Activated B cell treated with CpG ODN at 0.5 μM for 24 hours (primary cell): ENCODE measurements at regions of chr3 and their contacts with region 1.

Region 1: GRCh38 chr3:127672516-127673190 is at the start of gene ABTB1:
- DNase-seq: peak; percentile 79
- ATAC-seq: peak; percentile 85
- H3K4me3 Mint-ChIP-seq: peak within 1 kb of the TSS; percentile 91
- H3K27ac Mint-ChIP-seq: peak within 1 kb of the TSS; percentile 93
- H3K4me1 Mint-ChIP-seq: peaks cover 20% of the 10 kb centered on the region
- H3K27me3 Mint-ChIP-seq: no peaks in the 10 kb centered on the region
- CTCF ChIP-seq: no peak
- total RNA-seq, gene ABTB1: 36.1 and 42.0 TPM in 2 replicates

Region 2: DNA sequence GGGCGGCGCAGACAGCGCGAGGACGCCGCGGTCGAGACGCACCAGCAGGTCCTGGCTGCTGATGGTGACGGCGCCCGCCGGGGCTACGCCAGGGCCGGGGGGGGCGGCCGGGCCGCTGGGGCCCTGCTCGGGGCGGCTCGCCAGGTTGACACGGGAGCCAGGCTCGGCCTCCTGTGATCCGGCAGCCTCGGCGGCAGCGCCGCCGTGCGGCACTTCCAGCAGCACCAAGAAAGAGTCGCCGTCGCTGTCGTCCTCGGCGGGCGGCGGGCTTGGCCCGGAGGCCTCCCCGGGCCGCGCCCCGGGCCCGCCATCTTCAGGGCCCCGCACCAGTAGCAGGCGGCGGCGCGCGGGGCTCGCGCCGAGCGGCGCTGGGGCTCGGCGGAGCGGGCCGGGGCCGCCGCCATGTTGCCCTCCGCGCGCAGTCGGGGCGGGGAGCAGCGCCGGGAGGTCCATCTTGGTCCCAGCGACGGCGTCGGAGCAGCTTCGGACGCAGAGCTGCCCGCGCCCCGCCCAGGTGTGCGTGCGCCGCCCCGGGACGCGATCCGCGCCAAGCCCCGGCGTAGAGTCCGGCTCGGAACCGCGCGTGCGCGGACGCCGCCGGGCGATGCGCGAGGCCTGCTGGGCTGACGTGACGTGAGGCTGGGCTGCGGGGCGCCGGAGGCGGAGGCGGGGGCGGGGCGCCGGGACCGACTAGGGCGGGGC is 1197.1 kb before region 1 on chr3 and contains the start of gene ZXDC:
- CTCF ChIA-PET with region 1: no interaction called
- POLR2A ChIA-PET with region 1: no interaction called
- intact Hi-C with region 1: loop called (anchors 5 kb)
- DNase-seq: peak; percentile 92
- ATAC-seq: peak; percentile 86
- H3K4me3 Mint-ChIP-seq: peak within 1 kb of the TSS; percentile 87
- H3K27ac Mint-ChIP-seq: peak within 1 kb of the TSS; percentile 63
- H3K4me1 Mint-ChIP-seq: peaks cover 37% of the 10 kb centered on the region
- H3K27me3 Mint-ChIP-seq: no peaks in the 10 kb centered on the region
- CTCF ChIP-seq: no peak
- total RNA-seq, gene ZXDC: 37.4 and 45.4 TPM in 2 replicates

Region 3: GRCh38 chr3:126971891-126972351 is 700.7 kb before region 1 on chr3:
- CTCF ChIA-PET with region 1: no interaction called
- POLR2A ChIA-PET with region 1: no interaction called
- intact Hi-C with region 1: no loop called
- DNase-seq: peak; percentile 41
- ATAC-seq: peak; percentile 87
- H3K4me3 Mint-ChIP-seq: peak overlapping the region; percentile 19
- H3K27ac Mint-ChIP-seq: peak overlapping the region; percentile 46
- H3K4me1 Mint-ChIP-seq: peaks cover 15% of the 10 kb centered on the region
- H3K27me3 Mint-ChIP-seq: peaks cover 18% of the 10 kb centered on the region
- CTCF ChIP-seq: no peak

Region 4: DNA sequence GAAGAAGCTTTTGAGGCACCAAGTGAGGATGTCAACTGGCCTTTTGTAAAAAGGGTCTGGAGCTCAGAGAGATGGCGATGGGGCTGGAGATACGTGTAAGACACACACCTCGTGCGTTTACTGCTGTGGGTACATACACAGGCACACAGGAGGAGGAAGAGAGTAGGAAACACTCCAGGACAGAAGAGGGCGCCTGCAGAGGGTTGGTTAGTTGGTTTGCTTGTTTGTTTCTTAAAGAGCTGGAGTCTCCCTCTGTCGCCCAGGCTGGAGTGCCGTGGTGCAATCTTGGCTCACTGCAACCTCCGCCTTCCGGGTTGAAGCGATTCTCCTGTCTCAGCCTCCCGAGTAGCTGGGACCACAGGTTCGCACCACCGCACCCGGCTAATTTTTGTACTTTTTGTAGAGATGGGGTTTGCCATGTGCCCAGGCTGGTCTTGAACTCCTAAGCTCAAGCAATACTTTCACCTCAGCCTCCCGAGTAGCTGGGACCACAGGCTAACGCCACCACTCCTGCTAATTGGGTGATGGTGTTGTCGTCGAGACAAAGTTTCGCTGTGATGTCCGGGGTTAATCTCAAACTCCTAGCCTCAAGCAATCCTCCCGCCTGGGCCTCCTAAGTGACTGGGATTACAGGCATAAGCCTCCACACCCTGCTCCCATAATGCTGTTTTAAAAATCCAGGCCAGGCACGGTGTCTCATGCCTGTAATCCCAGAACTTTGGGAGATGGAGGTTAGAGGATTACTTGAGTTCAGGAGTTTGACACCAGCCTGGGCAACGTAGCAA is 383.5 kb before region 1 on chr3:
- CTCF ChIA-PET with region 1: no interaction called
- POLR2A ChIA-PET with region 1: no interaction called
- intact Hi-C with region 1: no loop called
- DNase-seq: no peak
- ATAC-seq: no peak
- H3K4me3 Mint-ChIP-seq: no peak overlapping the region
- H3K27ac Mint-ChIP-seq: no peak overlapping the region
- H3K4me1 Mint-ChIP-seq: no peaks in the 10 kb centered on the region
- H3K27me3 Mint-ChIP-seq: peaks cover 1% of the 10 kb centered on the region
- CTCF ChIP-seq: no peak

Region 5: GRCh38 chr3:127574880-127575878 is 97.5 kb before region 1 on chr3:
- CTCF ChIA-PET with region 1: interaction called, 3 read pairs
- POLR2A ChIA-PET with region 1: no interaction called
- intact Hi-C with region 1: loop called (anchors 5 kb)
- DNase-seq: peak; percentile 83
- ATAC-seq: peak; percentile 99
- H3K4me3 Mint-ChIP-seq: no peak overlapping the region
- H3K27ac Mint-ChIP-seq: peak overlapping the region; percentile 36
- H3K4me1 Mint-ChIP-seq: peaks cover 9% of the 10 kb centered on the region
- H3K27me3 Mint-ChIP-seq: no peaks in the 10 kb centered on the region
- CTCF ChIP-seq: no peak

Region 6: DNA sequence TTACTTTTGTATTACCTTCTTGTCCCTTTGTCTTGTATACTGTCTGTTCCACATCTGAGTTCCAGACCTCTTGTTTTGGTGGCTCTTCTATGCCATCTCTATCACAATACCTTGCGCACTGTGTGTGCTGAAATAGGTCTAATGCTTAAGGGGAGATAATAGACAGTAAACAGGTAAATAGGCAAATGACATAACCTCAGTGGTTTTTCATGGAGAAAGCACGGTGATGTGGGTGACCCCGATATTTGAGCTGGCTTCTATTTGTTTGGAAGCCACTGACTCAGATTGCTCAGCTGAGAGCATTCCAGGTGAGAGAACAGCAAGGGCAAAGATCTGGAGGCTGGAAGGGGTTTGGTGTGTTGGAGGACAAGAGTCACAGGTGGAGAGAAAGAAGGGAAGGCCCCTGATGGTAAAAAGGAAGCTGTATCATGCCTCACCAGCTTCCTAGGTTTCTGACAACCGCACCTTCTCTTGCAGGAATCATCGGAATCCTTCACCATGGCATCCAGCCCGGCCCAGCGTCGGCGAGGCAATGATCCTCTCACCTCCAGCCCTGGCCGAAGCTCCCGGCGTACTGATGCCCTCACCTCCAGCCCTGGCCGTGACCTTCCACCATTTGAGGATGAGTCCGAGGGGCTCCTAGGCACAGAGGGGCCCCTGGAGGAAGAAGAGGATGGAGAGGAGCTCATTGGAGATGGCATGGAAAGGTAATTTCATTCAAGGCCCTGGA is 73.6 kb before region 1 on chr3:
- CTCF ChIA-PET with region 1: no interaction called
- POLR2A ChIA-PET with region 1: interaction called, 12 read pairs
- intact Hi-C with region 1: loop called (anchors 1 kb)
- DNase-seq: no peak
- ATAC-seq: no peak
- H3K4me3 Mint-ChIP-seq: peak overlapping the region; percentile 95
- H3K27ac Mint-ChIP-seq: peak overlapping the region; percentile 93
- H3K4me1 Mint-ChIP-seq: peaks cover 29% of the 10 kb centered on the region
- H3K27me3 Mint-ChIP-seq: no peaks in the 10 kb centered on the region
- CTCF ChIP-seq: no peak

Region 7: GRCh38 chr3:127750226-127751031 is 77.8 kb after region 1 on chr3:
- CTCF ChIA-PET with region 1: no interaction called
- POLR2A ChIA-PET with region 1: interaction called, 6 read pairs
- intact Hi-C with region 1: loop called (anchors 1 kb)
- DNase-seq: peak; percentile 36
- ATAC-seq: peak; percentile 50
- H3K4me3 Mint-ChIP-seq: peak overlapping the region; percentile 69
- H3K27ac Mint-ChIP-seq: peak overlapping the region; percentile 88
- H3K4me1 Mint-ChIP-seq: peaks cover 57% of the 10 kb centered on the region
- H3K27me3 Mint-ChIP-seq: no peaks in the 10 kb centered on the region
- CTCF ChIP-seq: no peak

Region 8: DNA sequence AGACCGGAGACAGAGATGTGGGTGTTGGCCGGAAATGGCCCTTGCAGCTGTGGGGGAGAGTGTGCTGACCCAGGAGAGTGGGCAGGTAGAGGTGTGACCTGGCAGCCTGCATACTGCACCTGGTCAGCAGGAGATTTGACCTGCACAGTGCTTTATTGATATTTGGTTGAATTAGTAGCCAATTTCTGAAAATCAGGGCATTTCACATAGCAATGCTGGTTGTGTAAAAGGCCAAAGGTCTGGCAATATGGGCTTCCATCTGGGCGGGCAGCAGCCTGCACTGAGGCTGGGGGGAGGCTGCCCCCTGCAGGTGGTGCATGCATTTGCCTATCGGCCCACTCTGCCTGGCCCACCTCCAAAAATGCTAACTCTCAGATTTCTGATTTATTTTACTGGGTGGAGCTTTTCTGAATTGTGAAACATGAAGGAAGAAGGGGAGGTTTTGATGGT is 159.1 kb after region 1 on chr3:
- CTCF ChIA-PET with region 1: no interaction called
- POLR2A ChIA-PET with region 1: no interaction called
- intact Hi-C with region 1: loop called (anchors 1 kb)
- DNase-seq: peak; percentile 32
- ATAC-seq: no peak
- H3K4me3 Mint-ChIP-seq: no peak overlapping the region
- H3K27ac Mint-ChIP-seq: no peak overlapping the region
- H3K4me1 Mint-ChIP-seq: peaks cover 40% of the 10 kb centered on the region
- H3K27me3 Mint-ChIP-seq: no peaks in the 10 kb centered on the region
- CTCF ChIP-seq: no peak

Region 9: GRCh38 chr3:127899766-127900165 is 227.1 kb after region 1 on chr3:
- CTCF ChIA-PET with region 1: no interaction called
- POLR2A ChIA-PET with region 1: no interaction called
- intact Hi-C with region 1: no loop called
- DNase-seq: no peak
- ATAC-seq: no peak
- H3K4me3 Mint-ChIP-seq: no peak overlapping the region
- H3K27ac Mint-ChIP-seq: no peak overlapping the region
- H3K4me1 Mint-ChIP-seq: peaks cover 10% of the 10 kb centered on the region
- H3K27me3 Mint-ChIP-seq: peaks cover 4% of the 10 kb centered on the region
- CTCF ChIP-seq: no peak

Region 10: DNA sequence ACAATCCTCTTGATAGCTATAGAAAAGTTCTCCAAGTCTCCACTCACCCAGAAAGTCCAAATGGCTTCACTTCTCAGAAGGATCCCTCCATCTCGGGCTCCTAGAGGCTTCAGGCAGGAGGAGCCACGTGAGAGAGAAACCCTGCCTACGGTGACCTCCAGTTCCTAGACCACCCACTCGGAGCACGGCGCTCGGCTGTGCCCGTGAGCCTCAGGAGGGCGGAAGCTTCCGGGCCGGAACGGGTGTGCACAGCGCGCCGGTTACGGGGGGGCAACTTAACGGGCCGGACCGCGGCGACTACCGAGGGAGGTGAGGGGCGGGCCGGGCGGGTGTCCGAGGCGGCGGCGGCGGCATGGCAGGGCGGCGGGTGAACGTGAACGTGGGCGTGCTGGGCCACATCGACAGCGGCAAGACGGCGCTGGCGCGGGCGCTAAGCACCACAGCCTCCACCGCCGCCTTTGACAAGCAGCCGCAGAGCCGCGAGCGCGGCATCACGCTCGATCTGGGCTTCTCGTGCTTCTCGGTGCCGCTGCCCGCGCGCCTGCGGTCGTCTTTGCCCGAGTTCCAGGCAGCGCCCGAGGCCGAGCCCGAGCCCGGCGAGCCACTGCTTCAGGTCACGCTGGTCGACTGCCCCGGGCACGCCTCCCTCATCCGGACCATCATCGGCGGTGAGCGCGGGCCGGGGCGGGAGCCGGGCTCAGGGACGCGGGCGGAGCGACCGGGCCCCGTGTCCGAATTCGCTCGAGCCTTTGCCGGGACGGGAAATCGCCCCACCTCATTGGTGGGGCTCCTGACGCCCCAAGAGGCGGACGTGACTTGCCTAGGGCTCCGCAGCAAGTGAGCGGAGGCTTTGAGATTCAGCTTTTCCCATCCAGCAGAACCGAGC is 480.7 kb after region 1 on chr3 and contains the start of gene EEFSEC:
- CTCF ChIA-PET with region 1: no interaction called
- POLR2A ChIA-PET with region 1: interaction called, 8 read pairs
- intact Hi-C with region 1: loop called (anchors 2 kb)
- DNase-seq: peak; percentile 89
- ATAC-seq: peak; percentile 95
- H3K4me3 Mint-ChIP-seq: peak within 1 kb of the TSS; percentile 96
- H3K27ac Mint-ChIP-seq: peak within 1 kb of the TSS; percentile 95
- H3K4me1 Mint-ChIP-seq: peaks cover 17% of the 10 kb centered on the region
- H3K27me3 Mint-ChIP-seq: no peaks in the 10 kb centered on the region
- CTCF ChIP-seq: no peak
- total RNA-seq, gene EEFSEC: 20.0 and 21.3 TPM in 2 replicates